IMR-90 (cell line): ENCODE measurements at regions of chr7 and their contacts with region 1.

Region 1: GRCh38 chr7:43834463-43835251 is 34.7 kb downstream of the MRPS24 start:
- DNase-seq: peak; percentile 40
- ATAC-seq: no peak
- H3K4me3 ChIP-seq: peak overlapping the region; percentile 3; the same call in 1 of the 2 replicates
- H3K27ac ChIP-seq: no peak overlapping the region
- H3K4me1 ChIP-seq: no peaks in the 10 kb centered on the region
- H3K27me3 ChIP-seq: peaks cover 2% of the 10 kb centered on the region; the same call in 1 of the 2 replicates
- CTCF ChIP-seq: no peak
- POLR2A ChIP-seq: no peak
- RAD21 ChIP-seq: no peak

Region 2: GRCh38 chr7:42940985-42941847 is 893.4 kb before region 1 on chr7:
- CTCF ChIA-PET with region 1: no interaction called
- POLR2A ChIA-PET with region 1: no interaction called
- dilution Hi-C with region 1: no loop called
- in situ Hi-C with region 1: loop called (anchors 25 kb)
- intact Hi-C with region 1: loop called (anchors 5 kb)
- DNase-seq: peak; percentile 66
- ATAC-seq: peak; percentile 87
- H3K4me3 ChIP-seq: no peak overlapping the region
- H3K27ac ChIP-seq: no peak overlapping the region
- H3K4me1 ChIP-seq: no peaks in the 10 kb centered on the region
- H3K27me3 ChIP-seq: no peaks in the 10 kb centered on the region
- CTCF ChIP-seq: peak; percentile 90
- POLR2A ChIP-seq: no peak
- RAD21 ChIP-seq: peak; percentile 85

Region 3: GRCh38 chr7:43647673-43648472 is 186.8 kb before region 1 on chr7:
- CTCF ChIA-PET with region 1: no interaction called
- POLR2A ChIA-PET with region 1: no interaction called
- dilution Hi-C with region 1: no loop called
- in situ Hi-C with region 1: no loop called
- intact Hi-C with region 1: loop called (anchors 2 kb)
- DNase-seq: peak; percentile 100
- ATAC-seq: peak; percentile 68
- H3K4me3 ChIP-seq: peak overlapping the region; percentile 1; the same call in 1 of the 2 replicates
- H3K27ac ChIP-seq: peak overlapping the region; percentile 95
- H3K4me1 ChIP-seq: peaks cover 42% of the 10 kb centered on the region
- H3K27me3 ChIP-seq: no peaks in the 10 kb centered on the region
- CTCF ChIP-seq: no peak
- POLR2A ChIP-seq: peak; percentile 79
- RAD21 ChIP-seq: no peak

Region 4: DNA sequence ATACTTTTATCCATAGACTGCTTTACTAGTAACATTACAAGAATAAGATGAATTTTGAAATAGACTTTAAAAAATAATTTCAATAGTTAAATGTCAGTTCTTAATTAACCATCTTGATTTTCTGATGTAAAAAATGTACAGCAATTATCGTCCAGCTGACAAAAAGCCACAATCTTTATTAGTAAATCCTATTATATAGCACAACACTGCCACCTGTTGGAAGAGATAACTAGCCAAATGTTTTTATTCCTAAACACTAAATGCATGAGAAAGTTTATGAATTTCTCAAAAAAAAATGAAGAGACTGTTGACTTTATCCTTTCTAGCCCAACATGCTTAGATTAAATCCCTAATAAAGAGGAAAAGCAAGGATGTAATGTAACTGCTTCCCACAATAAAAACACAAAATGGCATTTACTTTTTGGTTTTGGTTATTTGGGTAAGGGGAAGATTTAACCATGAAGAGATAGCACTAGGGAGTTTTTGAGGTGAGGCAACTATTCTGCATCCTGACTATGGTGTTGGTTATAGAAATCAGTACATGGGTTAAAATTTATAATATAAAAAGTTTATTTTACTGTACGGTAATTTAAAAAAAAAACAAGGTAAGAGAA is 113.4 kb before region 1 on chr7:
- CTCF ChIA-PET with region 1: interaction called, 8 read pairs
- POLR2A ChIA-PET with region 1: no interaction called
- dilution Hi-C with region 1: no loop called
- in situ Hi-C with region 1: loop called (anchors 5 kb)
- intact Hi-C with region 1: loop called (anchors 2 kb)
- DNase-seq: peak; percentile 71
- ATAC-seq: peak; percentile 46
- H3K4me3 ChIP-seq: no peak overlapping the region
- H3K27ac ChIP-seq: no peak overlapping the region
- H3K4me1 ChIP-seq: peaks cover 3% of the 10 kb centered on the region
- H3K27me3 ChIP-seq: no peaks in the 10 kb centered on the region
- CTCF ChIP-seq: peak; percentile 75
- POLR2A ChIP-seq: no peak
- RAD21 ChIP-seq: peak; percentile 73